Ovary (tissue), 10 donors: ENCODE measurements at regions of chr6 and their contacts with region 1.

Region 1: GRCh38 chr6:32589598-32590449 is at the start of gene HLA-DRB1:
- DNase-seq: peak in 1 of 5 donors; percentile 15
- H3K4me3 ChIP-seq: no peak within 1 kb of the TSS
- H3K27ac ChIP-seq: no peak within 1 kb of the TSS
- H3K4me1 ChIP-seq: no peaks in the 10 kb centered on the region
- H3K27me3 ChIP-seq: no peaks in the 10 kb centered on the region
- CTCF ChIP-seq: no peak
- EP300 ChIP-seq: no peak
- POLR2A ChIP-seq: no peak
- total RNA-seq, gene HLA-DRB1: 16.4 to 136 (median 62.1) TPM

Region 2: GRCh38 chr6:32501016-32501415 is 88.8 kb before region 1 on chr6:
- intact Hi-C with region 1: no loop called
- DNase-seq: no peak
- H3K4me3 ChIP-seq: no peak overlapping the region
- H3K27ac ChIP-seq: no peak overlapping the region
- H3K4me1 ChIP-seq: no peaks in the 10 kb centered on the region
- H3K27me3 ChIP-seq: no peaks in the 10 kb centered on the region
- CTCF ChIP-seq: no peak
- EP300 ChIP-seq: no peak
- POLR2A ChIP-seq: no peak

Region 3: GRCh38 chr6:32529697-32530429 is 60.0 kb before region 1 on chr6 and contains the start of gene HLA-DRB5:
- intact Hi-C with region 1: loop called in 1 of 4 experiments (anchors 10 kb)
- DNase-seq: peak in 1 of 5 donors; percentile 8
- H3K4me3 ChIP-seq: no peak within 1 kb of the TSS
- H3K27ac ChIP-seq: no peak within 1 kb of the TSS
- H3K4me1 ChIP-seq: no peaks in the 10 kb centered on the region
- H3K27me3 ChIP-seq: no peaks in the 10 kb centered on the region
- CTCF ChIP-seq: no peak
- EP300 ChIP-seq: no peak
- POLR2A ChIP-seq: no peak
- total RNA-seq, gene HLA-DRB5: 0.72 to 113 (median 16.5) TPM

Region 4: DNA sequence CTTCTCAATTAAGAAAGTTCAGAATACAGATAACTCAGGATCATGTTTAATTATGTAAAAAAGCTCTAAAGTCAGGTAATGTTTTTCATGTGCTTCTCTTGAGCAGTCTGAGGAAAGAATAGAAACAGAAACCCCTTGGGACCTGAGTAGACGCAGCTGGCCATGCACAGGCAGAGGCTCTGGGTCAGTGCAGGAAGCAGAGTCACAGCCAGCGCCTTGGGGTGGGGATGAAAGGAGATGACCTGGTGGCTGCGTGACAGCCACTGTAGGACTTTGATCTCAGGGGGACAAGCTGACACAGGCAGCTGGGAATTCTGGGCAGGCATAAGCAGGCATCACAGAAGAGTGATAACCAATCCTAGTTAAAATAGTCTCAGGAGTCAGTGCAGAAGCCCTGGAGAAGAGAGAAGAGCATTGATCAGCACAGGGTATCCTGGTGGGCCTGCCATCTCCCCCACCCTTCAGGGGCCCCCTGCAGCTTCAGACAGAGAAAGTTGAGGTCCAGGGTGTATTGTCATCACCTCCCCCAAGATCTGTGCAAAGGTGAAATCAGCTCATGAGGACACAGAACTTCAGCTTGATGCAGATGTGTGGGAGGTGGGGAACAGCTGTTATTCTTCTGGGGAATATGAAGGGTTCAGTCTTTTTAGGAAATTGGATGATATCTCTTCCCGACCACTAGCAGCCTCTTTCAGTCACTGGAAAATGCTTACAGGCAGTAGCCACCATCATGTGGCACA is 70.2 kb after region 1 on chr6:
- intact Hi-C with region 1: no loop called
- DNase-seq: no peak
- H3K4me3 ChIP-seq: no peak overlapping the region
- H3K27ac ChIP-seq: no peak overlapping the region
- H3K4me1 ChIP-seq: peaks cover 3% of the 10 kb centered on the region
- H3K27me3 ChIP-seq: no peaks in the 10 kb centered on the region
- CTCF ChIP-seq: no peak
- EP300 ChIP-seq: no peak
- POLR2A ChIP-seq: no peak